ENCODE measurements at regions of chr11 and their contacts with region 1.

Region 1: GRCh38 chr11:45461514-45461913 is 175.4 kb upstream of the SYT13 start:
- DNase-seq: no peak
- ATAC-seq: no peak
- H3K4me3 ChIP-seq: no peak overlapping the region
- H3K27ac ChIP-seq: no peak overlapping the region
- H3K4me1 ChIP-seq: no peaks in the 10 kb centered on the region
- H3K27me3 ChIP-seq: no peaks in the 10 kb centered on the region
- CTCF ChIP-seq: no peak

Region 2: GRCh38 chr11:45603946-45604682 is 142.6 kb after region 1 on chr11:
- intact Hi-C with region 1: loop called in 1 of 3 experiments (anchors 5 kb)
- DNase-seq: no peak
- ATAC-seq: no peak
- H3K4me3 ChIP-seq: no peak overlapping the region
- H3K27ac ChIP-seq: no peak overlapping the region
- H3K4me1 ChIP-seq: no peaks in the 10 kb centered on the region
- H3K27me3 ChIP-seq: no peaks in the 10 kb centered on the region
- CTCF ChIP-seq: no peak